ENCODE measurements at regions of chr3 and their contacts with region 1.

Region 1: GRCh38 chr3:138594150-138594934 is at the start of gene CEP70:
- DNase-seq: peak; percentile 93 to 97
- H3K4me3 ChIP-seq: peak within 1 kb of the TSS; percentile 56 to 86
- H3K27ac ChIP-seq: peak within 1 kb of the TSS; percentile 78 to 92
- H3K4me1 ChIP-seq: peaks cover 0 to 16% (median 11%) of the 10 kb centered on the region in 4 donors
- H3K27me3 ChIP-seq: no peaks in the 10 kb centered on the region
- CTCF ChIP-seq: peak; percentile 88 to 94

Region 2: DNA sequence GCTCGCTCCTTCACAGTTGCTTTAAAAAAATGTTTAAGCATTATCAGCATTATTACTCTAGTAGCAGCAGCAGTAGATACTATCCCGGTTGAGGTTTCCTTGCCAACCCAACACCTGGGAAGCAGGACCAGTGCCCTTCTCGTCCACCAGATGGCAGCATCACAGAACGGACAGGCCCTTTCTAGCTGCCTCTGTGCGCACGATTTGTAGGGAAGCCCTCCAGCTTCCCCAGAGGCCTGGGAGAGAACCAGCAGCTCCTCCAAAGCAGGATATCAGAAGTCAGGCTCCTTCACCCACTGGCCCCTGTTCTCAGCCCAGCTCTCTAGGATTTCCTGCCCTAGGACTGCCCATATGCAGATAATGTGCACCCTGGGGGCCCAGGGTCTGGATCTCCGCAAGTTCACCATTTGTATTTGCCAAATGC is 176.8 kb before region 1 on chr3:
- intact Hi-C with region 1: loop called (anchors 5 kb)
- DNase-seq: peak; percentile 65 to 79
- H3K4me3 ChIP-seq: no peak overlapping the region
- H3K27ac ChIP-seq: no peak overlapping the region
- H3K4me1 ChIP-seq: no peaks in the 10 kb centered on the region
- H3K27me3 ChIP-seq: no peaks in the 10 kb centered on the region
- CTCF ChIP-seq: peak; percentile 82 to 92

Region 3: GRCh38 chr3:138824114-138824506 is 229.8 kb after region 1 on chr3:
- intact Hi-C with region 1: no loop called
- DNase-seq: no peak
- H3K4me3 ChIP-seq: no peak overlapping the region
- H3K27ac ChIP-seq: no peak overlapping the region
- H3K4me1 ChIP-seq: peaks cover 0 to 13% (median 0%) of the 10 kb centered on the region in 4 donors
- H3K27me3 ChIP-seq: no peaks in the 10 kb centered on the region
- CTCF ChIP-seq: no peak

Region 4: DNA sequence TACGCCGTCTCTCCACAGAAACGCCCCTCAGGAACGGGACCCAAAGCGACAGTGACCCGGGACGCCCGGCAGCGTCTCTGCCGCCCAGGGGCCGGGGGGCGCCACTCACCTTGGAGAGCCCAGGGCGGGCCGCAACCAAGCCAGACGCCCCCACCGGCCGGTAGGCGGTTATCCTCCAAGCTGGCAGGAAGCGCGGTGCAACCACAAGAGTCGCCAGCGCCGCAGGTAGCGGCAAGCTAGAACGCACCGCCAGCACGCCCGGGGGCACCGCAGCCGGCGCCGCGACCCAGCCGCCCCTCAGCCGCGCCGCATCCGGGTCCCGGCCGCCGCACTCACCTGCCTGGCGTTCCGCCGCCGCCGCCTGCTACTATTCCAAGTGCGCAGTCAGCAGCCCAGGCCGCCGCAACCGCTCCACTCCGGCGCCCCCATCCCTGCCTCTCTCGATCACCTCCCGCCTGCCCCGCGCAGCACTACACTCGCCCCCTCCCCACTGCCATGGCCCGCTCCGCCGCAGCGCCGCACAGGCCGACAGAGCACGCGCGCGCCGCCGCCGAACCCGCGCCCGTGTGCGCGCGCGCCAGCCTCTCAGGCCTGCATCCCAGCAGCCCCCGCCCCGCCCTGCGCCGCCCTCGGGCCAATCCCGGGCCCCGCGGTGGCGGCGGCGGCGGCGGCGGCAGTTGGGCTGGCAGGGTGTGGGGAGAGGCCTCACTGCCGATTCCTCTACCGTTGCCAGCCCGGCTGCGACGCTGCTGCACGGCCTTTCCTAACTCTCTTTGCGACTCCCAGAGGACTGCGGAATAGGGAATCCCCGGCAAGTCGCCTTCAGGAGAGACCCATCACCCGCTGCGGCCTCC is 240.2 kb after region 1 on chr3 and contains the start of gene PIK3CB:
- intact Hi-C with region 1: loop called (anchors 10 kb)
- DNase-seq: peak; percentile 84 to 93
- H3K4me3 ChIP-seq: peak within 1 kb of the TSS; percentile 69 to 86
- H3K27ac ChIP-seq: peak within 1 kb of the TSS; percentile 84 to 96
- H3K4me1 ChIP-seq: peaks cover 0 to 19% (median 11%) of the 10 kb centered on the region in 4 donors
- H3K27me3 ChIP-seq: no peaks in the 10 kb centered on the region
- CTCF ChIP-seq: peak in 1 of 2 experiments; percentile 26

Region 5: GRCh38 chr3:138915503-138916498 is 321.5 kb after region 1 on chr3:
- intact Hi-C with region 1: loop called (anchors 2 kb)
- DNase-seq: peak; percentile 91 to 95
- H3K4me3 ChIP-seq: peak overlapping the region; percentile 74 to 78
- H3K27ac ChIP-seq: peak overlapping the region; percentile 89 to 95
- H3K4me1 ChIP-seq: peaks cover 0 to 17% (median 10%) of the 10 kb centered on the region in 4 donors
- H3K27me3 ChIP-seq: no peaks in the 10 kb centered on the region
- CTCF ChIP-seq: peak; percentile 89 to 93

Measured in tibial artery (tissue), 4 donors.